AG04450 (cell line): ENCODE measurements at regions of chr4 and their contacts with region 1.

Region 1: DNA sequence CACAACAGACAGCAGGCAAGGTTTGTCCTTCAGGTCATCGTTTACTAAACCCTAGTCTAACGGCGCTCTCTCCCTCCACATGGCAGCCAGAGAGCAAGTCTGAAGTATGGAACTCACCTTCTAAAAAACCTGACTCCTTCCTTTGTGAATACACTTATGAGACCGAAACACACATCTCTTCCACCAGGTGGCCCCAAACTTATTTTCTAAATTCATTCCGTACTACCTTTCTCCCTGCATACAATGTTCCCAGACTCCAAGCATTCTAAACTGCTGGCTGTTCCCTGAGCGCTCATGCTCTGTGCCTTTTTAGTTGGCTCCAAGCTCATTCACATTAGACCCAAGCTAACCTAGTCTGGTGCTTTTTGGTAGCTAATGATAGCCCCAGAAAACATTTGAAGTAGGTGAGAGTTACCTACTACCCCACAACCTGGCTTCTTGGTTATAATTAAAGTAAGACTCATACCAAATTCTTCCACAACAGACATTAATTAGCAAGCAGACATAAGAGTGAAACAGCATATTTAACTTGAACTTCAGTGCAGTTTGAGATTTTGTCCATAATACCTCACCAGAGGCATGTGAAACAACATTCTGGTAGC is 67.6 kb upstream of the DCLK2 start:
- DNase-seq: peak; percentile 36
- H3K4me3 ChIP-seq: no peak overlapping the region
- H3K27ac ChIP-seq: no peak overlapping the region
- H3K27me3 ChIP-seq: no peaks in the 10 kb centered on the region
- CTCF ChIP-seq: peak; percentile 66

Region 2: GRCh38 chr4:150021483-150021882 is 10.9 kb after region 1 on chr4:
- CTCF ChIA-PET with region 1: interaction called, 11 read pairs
- POLR2A ChIA-PET with region 1: no interaction called
- DNase-seq: no peak
- H3K4me3 ChIP-seq: no peak overlapping the region
- H3K27ac ChIP-seq: no peak overlapping the region
- H3K27me3 ChIP-seq: no peaks in the 10 kb centered on the region
- CTCF ChIP-seq: no peak

Region 3: GRCh38 chr4:150033901-150034300 is 23.3 kb after region 1 on chr4:
- CTCF ChIA-PET with region 1: interaction called, 15 read pairs
- POLR2A ChIA-PET with region 1: no interaction called
- DNase-seq: peak; percentile 66
- H3K4me3 ChIP-seq: no peak overlapping the region
- H3K27ac ChIP-seq: no peak overlapping the region
- H3K27me3 ChIP-seq: no peaks in the 10 kb centered on the region
- CTCF ChIP-seq: no peak

Region 4: GRCh38 chr4:150217192-150217591 is 206.6 kb after region 1 on chr4:
- CTCF ChIA-PET with region 1: interaction called, 108 read pairs
- POLR2A ChIA-PET with region 1: no interaction called
- DNase-seq: no peak
- H3K4me3 ChIP-seq: no peak overlapping the region
- H3K27ac ChIP-seq: no peak overlapping the region
- H3K27me3 ChIP-seq: no peaks in the 10 kb centered on the region
- CTCF ChIP-seq: peak; percentile 54